CD8-positive, alpha-beta T cell (primary cell): ENCODE measurements at regions of chr3 and their contacts with region 1.

Region 1: GRCh38 chr3:115134648-115135347 is 12.3 kb downstream of the ZBTB20 start:
- DNase-seq: no peak
- ATAC-seq: no peak
- H3K4me3 ChIP-seq: no peak overlapping the region
- H3K4me3 Mint-ChIP-seq: no peak overlapping the region
- H3K27ac ChIP-seq: no peak overlapping the region
- H3K27ac Mint-ChIP-seq: no peak overlapping the region
- H3K4me1 ChIP-seq: no peaks in the 10 kb centered on the region
- H3K4me1 Mint-ChIP-seq: peaks cover 13% of the 10 kb centered on the region
- H3K27me3 ChIP-seq: no peaks in the 10 kb centered on the region
- H3K27me3 Mint-ChIP-seq: no peaks in the 10 kb centered on the region
- CTCF ChIP-seq: no peak

Region 2: DNA sequence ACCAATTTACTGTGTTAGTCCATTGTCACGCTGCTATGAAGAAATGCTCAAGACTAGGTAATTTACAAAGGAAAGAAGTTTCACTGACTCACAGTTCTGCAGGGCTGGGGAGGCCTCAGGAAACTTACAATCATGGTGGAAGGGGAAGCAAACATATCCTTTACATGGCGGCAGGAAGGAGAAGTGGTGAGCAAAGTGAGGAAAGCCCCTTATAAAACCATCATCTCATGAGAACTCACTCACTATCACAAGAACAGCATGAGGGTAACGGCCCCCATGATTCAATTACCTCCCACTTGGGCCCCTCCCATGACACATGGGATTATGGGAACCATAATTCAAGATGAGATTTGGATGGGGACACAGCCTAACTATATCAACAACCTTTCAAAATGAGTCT is 1458.5 kb before region 1 on chr3:
- CTCF ChIA-PET with region 1: no interaction called
- POLR2A ChIA-PET with region 1: no interaction called
- intact Hi-C with region 1: no loop called
- DNase-seq: peak in 1 of 9 experiments; percentile 16
- ATAC-seq: no peak
- H3K4me3 ChIP-seq: no peak overlapping the region
- H3K4me3 Mint-ChIP-seq: no peak overlapping the region
- H3K27ac ChIP-seq: no peak overlapping the region
- H3K27ac Mint-ChIP-seq: no peak overlapping the region
- H3K4me1 ChIP-seq: no peaks in the 10 kb centered on the region
- H3K4me1 Mint-ChIP-seq: peaks cover 10% of the 10 kb centered on the region
- H3K27me3 ChIP-seq: no peaks in the 10 kb centered on the region
- H3K27me3 Mint-ChIP-seq: no peaks in the 10 kb centered on the region
- CTCF ChIP-seq: no peak

Region 3: GRCh38 chr3:114953800-114954199 is 181.0 kb before region 1 on chr3:
- CTCF ChIA-PET with region 1: no interaction called
- POLR2A ChIA-PET with region 1: no interaction called
- intact Hi-C with region 1: no loop called
- DNase-seq: no peak
- ATAC-seq: no peak
- H3K4me3 ChIP-seq: no peak overlapping the region
- H3K4me3 Mint-ChIP-seq: no peak overlapping the region
- H3K27ac ChIP-seq: no peak overlapping the region
- H3K27ac Mint-ChIP-seq: no peak overlapping the region
- H3K4me1 ChIP-seq: no peaks in the 10 kb centered on the region
- H3K4me1 Mint-ChIP-seq: peaks cover 6% of the 10 kb centered on the region
- H3K27me3 ChIP-seq: no peaks in the 10 kb centered on the region
- H3K27me3 Mint-ChIP-seq: no peaks in the 10 kb centered on the region
- CTCF ChIP-seq: no peak

Region 4: GRCh38 chr3:115113367-115113766 is 21.4 kb before region 1 on chr3:
- CTCF ChIA-PET with region 1: no interaction called
- POLR2A ChIA-PET with region 1: no interaction called
- intact Hi-C with region 1: loop called in 1 of 2 experiments (anchors 2 kb)
- DNase-seq: no peak
- ATAC-seq: no peak
- H3K4me3 ChIP-seq: no peak overlapping the region
- H3K4me3 Mint-ChIP-seq: no peak overlapping the region
- H3K27ac ChIP-seq: no peak overlapping the region
- H3K27ac Mint-ChIP-seq: no peak overlapping the region
- H3K4me1 ChIP-seq: no peaks in the 10 kb centered on the region
- H3K4me1 Mint-ChIP-seq: peaks cover 18% of the 10 kb centered on the region
- H3K27me3 ChIP-seq: no peaks in the 10 kb centered on the region
- H3K27me3 Mint-ChIP-seq: no peaks in the 10 kb centered on the region
- CTCF ChIP-seq: no peak